HEK293T (cell line): ENCODE measurements at regions of chr14 and their contacts with region 1.

Region 1: GRCh38 chr14:74302634-74303577 is at the start of gene ABCD4:
- DNase-seq: peak; percentile 95

Region 2: GRCh38 chr14:74290415-74290814 is 12.5 kb before region 1 on chr14:
- CTCF ChIA-PET with region 1: interaction called, 5 read pairs
- POLR2A ChIA-PET with region 1: interaction called, 10 read pairs
- DNase-seq: peak; percentile 64

Region 3: GRCh38 chr14:74313601-74314000 is 10.7 kb after region 1 on chr14:
- CTCF ChIA-PET with region 1: interaction called, 8 read pairs
- POLR2A ChIA-PET with region 1: interaction called, 13 read pairs
- DNase-seq: no peak

Region 4: DNA sequence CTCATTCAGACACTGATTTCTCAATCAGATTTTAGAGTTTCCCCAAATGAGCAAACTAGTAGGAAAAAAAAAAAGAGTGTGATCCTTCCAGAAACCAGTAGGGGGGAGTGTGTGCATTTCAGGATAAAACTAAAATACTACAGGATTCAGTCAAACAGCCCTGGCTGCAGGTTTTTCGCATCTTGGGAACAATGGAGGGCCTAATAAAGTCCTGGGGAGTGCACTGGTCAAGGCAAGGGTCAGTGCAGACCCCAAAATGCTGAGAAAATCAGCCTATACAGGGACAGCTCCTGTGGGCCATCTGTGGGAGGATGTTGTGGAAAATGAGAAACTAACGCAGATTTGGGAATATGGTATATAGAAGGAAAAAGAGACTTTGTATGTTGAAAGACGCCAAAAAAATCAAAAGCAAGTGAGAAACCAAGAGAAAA is 22.0 kb after region 1 on chr14:
- CTCF ChIA-PET with region 1: interaction called, 4 read pairs
- POLR2A ChIA-PET with region 1: interaction called, 10 read pairs
- DNase-seq: peak; percentile 65

Region 5: GRCh38 chr14:74389980-74390379 is 87.1 kb after region 1 on chr14:
- CTCF ChIA-PET with region 1: no interaction called
- POLR2A ChIA-PET with region 1: no interaction called
- DNase-seq: no peak